Common myeloid progenitor, CD34-positive (primary cell): ENCODE measurements at regions of chr13 and their contacts with region 1.

Region 1: GRCh38 chr13:45340422-45340925 is 509 bp downstream of the TPT1 start:
- DNase-seq: peak; percentile 84 to 91 (median 89)
- H3K4me3 ChIP-seq: peak overlapping the region; percentile 79 to 93 (median 91)
- H3K27ac ChIP-seq: peak overlapping the region; percentile 96 to 98
- H3K4me1 ChIP-seq: peaks cover 25 to 58% (median 51%) of the 10 kb centered on the region in 4 experiments
- H3K27me3 ChIP-seq: no peaks in the 10 kb centered on the region

Region 2: DNA sequence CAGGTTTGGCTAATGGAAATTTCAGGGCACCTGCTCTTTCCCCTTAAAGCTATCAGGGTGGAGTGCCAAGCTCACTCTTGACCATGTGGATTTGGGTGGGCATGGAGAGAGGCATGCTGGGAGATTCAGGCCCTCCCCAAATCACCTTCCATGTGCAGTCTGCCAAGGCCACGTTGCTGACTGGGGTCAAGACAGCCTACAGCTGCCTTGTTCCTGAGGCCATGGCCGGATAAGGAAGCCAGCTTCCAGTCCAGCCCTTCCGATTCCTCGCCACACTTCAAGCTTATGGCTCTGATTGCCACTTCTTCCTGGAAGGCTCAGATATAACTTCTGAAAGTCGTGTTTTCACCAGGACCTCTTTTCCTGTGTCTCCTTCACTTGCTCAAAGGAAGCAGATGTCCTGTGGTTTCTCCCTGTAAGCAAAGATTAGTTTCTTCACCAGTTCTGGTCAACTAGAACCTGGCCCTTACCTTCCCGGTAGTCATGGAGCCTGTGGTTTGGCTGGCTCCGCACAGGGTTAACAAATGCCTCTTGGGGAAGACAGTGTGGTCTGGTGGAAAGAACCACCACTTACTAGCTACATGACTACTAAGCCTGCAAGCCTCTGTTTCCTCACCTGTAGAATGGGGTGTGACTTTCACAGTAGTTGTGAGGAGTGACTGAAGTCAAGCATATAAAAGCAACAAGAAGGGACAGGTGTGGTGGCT is 16.6 kb after region 1 on chr13:
- CTCF ChIA-PET with region 1: interaction called, 13 read pairs
- POLR2A ChIA-PET with region 1: interaction called, 20 read pairs
- DNase-seq: peak; percentile 67 to 98 (median 97)
- H3K4me3 ChIP-seq: no peak overlapping the region
- H3K27ac ChIP-seq: no peak overlapping the region
- H3K4me1 ChIP-seq: peaks cover 0 to 19% (median 16%) of the 10 kb centered on the region in 4 experiments
- H3K27me3 ChIP-seq: no peaks in the 10 kb centered on the region

Region 3: DNA sequence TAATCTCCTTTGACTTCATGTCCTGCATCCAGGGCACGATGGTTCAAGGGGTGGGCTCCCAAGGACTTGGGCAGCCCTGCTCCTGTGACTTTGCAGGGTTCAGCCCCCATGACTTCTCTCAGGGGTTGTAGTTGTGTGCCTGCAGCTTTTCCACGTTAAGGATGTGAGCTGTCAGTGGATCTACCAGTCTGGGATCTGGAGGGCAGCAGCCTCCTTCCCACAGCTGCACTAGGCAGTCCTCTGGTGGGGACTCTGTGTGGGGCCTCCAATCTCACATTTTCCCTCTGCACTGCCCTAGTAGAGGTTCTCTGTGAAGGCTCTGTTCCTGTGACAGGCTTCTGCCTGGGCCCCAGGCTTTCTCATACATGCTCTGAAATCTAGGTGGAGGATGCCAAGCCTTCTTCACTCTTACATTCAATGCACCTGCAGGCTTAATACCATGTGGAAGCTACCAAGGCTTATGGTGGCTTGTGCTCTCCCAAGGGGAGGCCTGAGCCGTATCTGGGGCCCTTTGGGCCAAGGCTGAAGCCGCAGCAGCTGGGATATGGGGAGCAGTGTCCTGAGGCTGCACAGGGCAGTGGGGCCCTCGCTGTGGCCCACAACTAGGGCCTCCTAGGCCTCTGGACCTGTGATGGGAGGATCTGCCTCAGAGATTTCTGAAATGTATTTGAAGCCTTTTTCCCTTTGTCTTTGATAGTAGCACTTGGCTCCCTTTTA is 314.3 kb after region 1 on chr13:
- CTCF ChIA-PET with region 1: no interaction called
- POLR2A ChIA-PET with region 1: no interaction called
- DNase-seq: no peak
- H3K4me3 ChIP-seq: no peak overlapping the region
- H3K27ac ChIP-seq: no peak overlapping the region
- H3K4me1 ChIP-seq: no peaks in the 10 kb centered on the region
- H3K27me3 ChIP-seq: no peaks in the 10 kb centered on the region

Region 4: DNA sequence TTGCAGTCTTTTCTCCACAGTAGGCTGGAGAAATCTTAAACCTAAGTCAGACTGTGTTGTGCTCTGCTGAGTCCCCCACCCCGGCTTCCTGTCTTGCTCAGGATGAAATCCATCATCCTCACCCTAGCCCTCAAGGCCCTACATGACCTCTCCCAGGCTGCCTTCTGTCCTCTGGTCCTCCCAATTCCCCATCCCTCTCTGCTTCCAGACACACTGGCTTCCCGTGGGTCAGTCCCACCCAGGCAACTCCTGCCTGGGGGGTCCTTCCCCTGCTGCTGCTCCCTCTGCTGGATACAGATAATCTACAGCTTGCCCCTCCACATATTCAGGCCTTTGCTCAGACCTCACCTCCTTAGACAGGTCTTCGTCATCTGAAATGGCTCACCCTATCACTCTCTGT is 343.2 kb after region 1 on chr13:
- CTCF ChIA-PET with region 1: no interaction called
- POLR2A ChIA-PET with region 1: no interaction called
- DNase-seq: no peak
- H3K4me3 ChIP-seq: no peak overlapping the region
- H3K27ac ChIP-seq: no peak overlapping the region
- H3K4me1 ChIP-seq: no peaks in the 10 kb centered on the region
- H3K27me3 ChIP-seq: peaks cover 0 to under 1% (median 0%) of the 10 kb centered on the region in 5 experiments